Activated CD4-positive, alpha-beta memory T cell treated with anti-CD3 and anti-CD28 coated beads for 36 hours (primary cell): ENCODE measurements at regions of chr19 and their contacts with region 1.

Region 1: GRCh38 chr19:43595999-43596841 is at the starts of genes IRGQ and ZNF576:
- DNase-seq: peak; percentile 100
- H3K4me3 Mint-ChIP-seq: peak within 1 kb of the TSS; percentile 94
- H3K27ac Mint-ChIP-seq: peak within 1 kb of the TSS; percentile 98
- H3K4me1 Mint-ChIP-seq: peaks cover 30% of the 10 kb centered on the region
- H3K27me3 Mint-ChIP-seq: no peaks in the 10 kb centered on the region
- total RNA-seq, gene IRGQ: 18.3 to 19.9 TPM
- total RNA-seq, gene ZNF576: 12.6 to 14.1 TPM

Region 2: GRCh38 chr19:43438291-43439096 is 157.7 kb before region 1 on chr19:
- CTCF ChIA-PET with region 1: interaction called, 10 read pairs
- POLR2A ChIA-PET with region 1: no interaction called
- intact Hi-C with region 1: no loop called
- DNase-seq: peak; percentile 51
- H3K4me3 Mint-ChIP-seq: no peak overlapping the region
- H3K27ac Mint-ChIP-seq: peak overlapping the region; percentile 71
- H3K4me1 Mint-ChIP-seq: peaks cover 34% of the 10 kb centered on the region
- H3K27me3 Mint-ChIP-seq: no peaks in the 10 kb centered on the region

Region 3: DNA sequence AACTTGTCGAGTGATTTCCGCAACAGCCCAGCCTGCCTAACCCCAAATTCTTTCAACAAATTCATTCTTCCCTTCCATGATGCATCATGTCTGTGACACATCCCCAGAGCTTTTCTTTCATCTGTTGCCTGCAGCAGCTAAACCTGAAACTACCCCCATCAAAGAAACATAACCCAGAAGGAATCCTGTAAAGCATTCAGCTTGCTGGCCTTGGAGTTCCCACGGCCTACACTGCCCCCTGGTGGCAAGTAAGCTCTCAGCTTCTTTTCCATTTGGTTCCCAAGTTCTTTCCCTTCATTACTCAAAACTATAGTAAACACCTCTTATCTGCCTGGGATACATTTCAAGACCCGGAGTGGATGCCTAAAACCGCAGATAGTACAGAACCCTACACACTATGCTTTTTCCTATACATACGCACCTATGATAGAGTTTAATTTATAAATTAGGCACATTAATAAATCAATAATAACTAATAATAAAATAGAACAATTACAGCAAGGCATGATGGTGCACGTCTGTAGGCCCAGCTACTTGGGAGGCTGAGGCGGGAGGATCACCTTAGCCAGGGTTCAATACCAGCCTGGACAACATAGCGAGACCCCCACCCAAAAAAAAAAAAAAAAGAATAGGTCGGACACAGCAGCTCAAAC is 76.7 kb before region 1 on chr19:
- CTCF ChIA-PET with region 1: interaction called, 36 read pairs
- POLR2A ChIA-PET with region 1: no interaction called
- intact Hi-C with region 1: loop called (anchors 2 kb)
- DNase-seq: peak; percentile 86
- H3K4me3 Mint-ChIP-seq: no peak overlapping the region
- H3K27ac Mint-ChIP-seq: peak overlapping the region; percentile 64
- H3K4me1 Mint-ChIP-seq: peaks cover 20% of the 10 kb centered on the region
- H3K27me3 Mint-ChIP-seq: no peaks in the 10 kb centered on the region

Region 4: DNA sequence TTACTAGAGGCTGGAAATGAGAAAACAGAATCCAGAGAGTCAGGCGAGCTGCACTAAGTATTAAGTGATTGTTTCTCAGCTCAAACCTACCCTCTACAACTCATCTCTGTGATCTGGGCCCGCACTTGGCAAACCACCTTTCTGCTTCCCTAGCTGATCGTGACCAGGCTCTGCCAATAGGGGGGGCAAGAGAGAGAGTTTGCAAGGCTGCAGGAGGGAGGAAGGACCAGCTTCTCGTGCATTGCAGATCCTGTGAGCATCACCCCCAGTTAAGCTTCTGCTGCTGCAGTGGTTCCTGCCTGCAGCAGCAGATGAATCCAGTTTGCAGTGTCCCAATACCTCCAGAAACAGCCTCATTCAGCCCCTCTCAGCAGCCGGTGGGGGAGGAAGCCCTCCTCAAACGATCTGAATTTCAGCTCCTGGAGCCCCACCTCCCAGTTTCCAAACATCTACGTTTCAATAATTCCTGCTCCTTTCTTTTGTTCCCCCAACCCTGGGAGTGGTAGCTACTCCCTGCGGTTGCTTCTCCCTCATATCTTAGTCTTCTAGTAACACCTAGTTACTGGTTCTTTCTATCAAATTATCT is 40.9 kb before region 1 on chr19:
- CTCF ChIA-PET with region 1: interaction called, 145 read pairs
- POLR2A ChIA-PET with region 1: interaction called, 11 read pairs
- intact Hi-C with region 1: loop called (anchors 1 kb)
- DNase-seq: peak; percentile 87
- H3K4me3 Mint-ChIP-seq: no peak overlapping the region
- H3K27ac Mint-ChIP-seq: peak overlapping the region; percentile 38
- H3K4me1 Mint-ChIP-seq: peaks cover 9% of the 10 kb centered on the region
- H3K27me3 Mint-ChIP-seq: no peaks in the 10 kb centered on the region

Region 5: DNA sequence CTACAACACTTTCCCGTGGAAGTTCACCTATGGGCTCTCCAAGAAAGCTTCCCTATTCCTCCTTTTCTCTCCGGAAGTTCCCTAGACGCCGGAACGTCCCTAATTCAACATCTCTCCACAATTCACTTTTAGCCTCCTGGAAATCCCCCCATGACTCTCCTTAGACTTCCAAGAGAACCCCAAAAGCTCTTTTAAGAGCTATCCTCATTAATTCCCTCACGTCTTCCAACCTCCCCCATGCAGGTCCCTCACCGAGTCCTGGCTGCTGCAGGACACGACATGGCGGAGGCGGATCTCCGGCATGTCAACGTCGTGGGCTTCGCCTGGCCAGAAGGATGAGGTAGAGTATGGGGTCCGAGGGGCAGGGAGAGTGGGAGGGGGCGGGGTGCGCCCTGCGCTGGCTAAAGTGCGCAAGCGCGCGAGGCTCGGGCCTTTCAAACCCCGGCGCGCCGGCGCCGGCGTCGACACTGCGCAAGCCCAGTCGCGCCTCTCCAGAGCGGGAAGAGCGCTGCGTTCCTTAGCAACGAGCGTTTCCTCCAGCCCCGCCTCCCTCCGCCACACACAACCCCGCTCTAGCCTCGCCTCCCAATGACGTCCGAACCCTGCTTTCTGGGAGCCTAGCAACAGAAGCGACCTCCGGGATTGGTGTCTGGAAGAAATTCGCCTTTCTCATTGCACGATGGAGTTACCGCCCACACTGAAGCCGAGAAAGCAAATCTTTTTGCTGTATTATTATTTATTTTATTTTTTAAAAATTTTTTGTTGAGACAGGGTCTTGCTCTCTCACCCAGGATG is 20.9 kb before region 1 on chr19 and contains the starts of genes PINLYP and XRCC1:
- CTCF ChIA-PET with region 1: interaction called, 56 read pairs
- POLR2A ChIA-PET with region 1: interaction called, 17 read pairs
- intact Hi-C with region 1: loop called (anchors 1 kb)
- DNase-seq: peak; percentile 98
- H3K4me3 Mint-ChIP-seq: peak within 1 kb of the TSS; percentile 96
- H3K27ac Mint-ChIP-seq: peak within 1 kb of the TSS; percentile 86
- H3K4me1 Mint-ChIP-seq: peaks cover 24% of the 10 kb centered on the region
- H3K27me3 Mint-ChIP-seq: no peaks in the 10 kb centered on the region
- total RNA-seq, gene PINLYP: 2.2 to 3.7 TPM
- total RNA-seq, gene XRCC1: 42.5 to 43.0 TPM

Region 6: GRCh38 chr19:43743022-43743421 is 146.8 kb after region 1 on chr19:
- CTCF ChIA-PET with region 1: interaction called, 10 read pairs
- POLR2A ChIA-PET with region 1: no interaction called
- intact Hi-C with region 1: no loop called
- DNase-seq: no peak
- H3K4me3 Mint-ChIP-seq: no peak overlapping the region
- H3K27ac Mint-ChIP-seq: no peak overlapping the region
- H3K4me1 Mint-ChIP-seq: peaks cover 17% of the 10 kb centered on the region
- H3K27me3 Mint-ChIP-seq: no peaks in the 10 kb centered on the region